ENCODE measurements at regions of chr9 and their contacts with region 1.

Region 1: DNA sequence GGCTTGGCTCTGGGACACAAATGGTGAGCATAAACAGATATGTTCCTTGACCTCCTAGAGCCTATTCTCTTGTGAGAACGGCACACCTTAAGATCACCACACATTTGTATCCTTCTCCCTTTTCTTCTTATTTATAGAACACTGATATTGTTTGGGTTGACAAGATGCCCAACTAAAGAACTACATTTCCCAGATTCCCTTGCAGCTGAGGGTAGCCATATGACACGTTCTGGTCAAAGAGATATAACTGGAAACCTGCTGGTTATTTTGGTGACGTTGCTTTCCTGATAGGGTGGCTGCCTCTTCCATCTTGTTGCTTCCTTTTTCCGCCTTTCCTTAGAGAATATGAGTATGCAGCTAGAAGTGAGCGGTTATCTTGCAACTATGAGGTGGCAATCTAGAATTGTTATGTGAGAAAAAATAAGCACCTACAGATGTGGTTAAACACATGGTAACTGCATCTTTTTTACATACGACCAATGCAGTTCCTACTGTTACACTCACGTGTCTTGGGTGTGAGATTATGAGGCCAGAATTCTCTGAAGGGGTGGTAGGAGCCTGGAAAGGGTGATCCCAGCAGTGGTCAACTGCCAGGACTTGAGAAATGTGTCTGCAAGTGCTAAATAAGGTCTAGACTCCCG is 72.9 kb downstream of the SEC61B start:
- DNase-seq: no peak
- ATAC-seq: no peak
- H3K4me3 Mint-ChIP-seq: no peak overlapping the region
- H3K27ac Mint-ChIP-seq: no peak overlapping the region
- H3K4me1 Mint-ChIP-seq: peaks cover 17% of the 10 kb centered on the region
- H3K27me3 Mint-ChIP-seq: peaks cover 13% of the 10 kb centered on the region
- CTCF ChIP-seq: no peak

Region 2: GRCh38 chr9:99931157-99931840 is 636.4 kb after region 1 on chr9:
- CTCF ChIA-PET with region 1: no interaction called
- POLR2A ChIA-PET with region 1: interaction called, 12 read pairs
- intact Hi-C with region 1: no loop called
- DNase-seq: no peak
- ATAC-seq: no peak
- H3K4me3 Mint-ChIP-seq: no peak overlapping the region
- H3K27ac Mint-ChIP-seq: no peak overlapping the region
- H3K4me1 Mint-ChIP-seq: no peaks in the 10 kb centered on the region
- H3K27me3 Mint-ChIP-seq: no peaks in the 10 kb centered on the region
- CTCF ChIP-seq: no peak